ENCODE measurements at regions of chr15 and their contacts with region 1.

Region 1: GRCh38 chr15:40274350-40275274 is 8.3 kb downstream of the ANKRD63 start:
- DNase-seq: peak; percentile 90
- H3K4me3 Mint-ChIP-seq: no peak overlapping the region
- H3K27ac Mint-ChIP-seq: peak overlapping the region; percentile 41
- H3K4me1 Mint-ChIP-seq: peaks cover 5% of the 10 kb centered on the region
- H3K27me3 Mint-ChIP-seq: peaks cover 25% of the 10 kb centered on the region

Region 2: GRCh38 chr15:40182358-40183029 is 92.1 kb before region 1 on chr15:
- CTCF ChIA-PET with region 1: no interaction called
- POLR2A ChIA-PET with region 1: no interaction called
- DNase-seq: no peak
- H3K4me3 Mint-ChIP-seq: peak overlapping the region; percentile 10
- H3K27ac Mint-ChIP-seq: peak overlapping the region; percentile 85
- H3K4me1 Mint-ChIP-seq: peaks cover 36% of the 10 kb centered on the region
- H3K27me3 Mint-ChIP-seq: no peaks in the 10 kb centered on the region

Region 3: GRCh38 chr15:40217159-40217824 is 57.3 kb before region 1 on chr15:
- CTCF ChIA-PET with region 1: interaction called, 32 read pairs
- POLR2A ChIA-PET with region 1: interaction called, 3 read pairs
- DNase-seq: peak; percentile 68
- H3K4me3 Mint-ChIP-seq: no peak overlapping the region
- H3K27ac Mint-ChIP-seq: no peak overlapping the region
- H3K4me1 Mint-ChIP-seq: no peaks in the 10 kb centered on the region
- H3K27me3 Mint-ChIP-seq: no peaks in the 10 kb centered on the region

Region 4: GRCh38 chr15:40263024-40263754 is 11.4 kb before region 1 on chr15:
- CTCF ChIA-PET with region 1: interaction called, 53 read pairs
- POLR2A ChIA-PET with region 1: no interaction called
- DNase-seq: no peak
- H3K4me3 Mint-ChIP-seq: no peak overlapping the region
- H3K27ac Mint-ChIP-seq: no peak overlapping the region
- H3K4me1 Mint-ChIP-seq: no peaks in the 10 kb centered on the region
- H3K27me3 Mint-ChIP-seq: peaks cover 3% of the 10 kb centered on the region

Region 5: GRCh38 chr15:40307421-40308211 is 33.0 kb after region 1 on chr15 and contains the start of gene PLCB2:
- CTCF ChIA-PET with region 1: interaction called, 61 read pairs
- POLR2A ChIA-PET with region 1: no interaction called
- DNase-seq: peak; percentile 79
- H3K4me3 Mint-ChIP-seq: peak within 1 kb of the TSS; percentile 99
- H3K27ac Mint-ChIP-seq: peak within 1 kb of the TSS; percentile 98
- H3K4me1 Mint-ChIP-seq: peaks cover 42% of the 10 kb centered on the region
- H3K27me3 Mint-ChIP-seq: peaks cover 7% of the 10 kb centered on the region
- total RNA-seq, gene PLCB2: 195 to 196 TPM

Region 6: DNA sequence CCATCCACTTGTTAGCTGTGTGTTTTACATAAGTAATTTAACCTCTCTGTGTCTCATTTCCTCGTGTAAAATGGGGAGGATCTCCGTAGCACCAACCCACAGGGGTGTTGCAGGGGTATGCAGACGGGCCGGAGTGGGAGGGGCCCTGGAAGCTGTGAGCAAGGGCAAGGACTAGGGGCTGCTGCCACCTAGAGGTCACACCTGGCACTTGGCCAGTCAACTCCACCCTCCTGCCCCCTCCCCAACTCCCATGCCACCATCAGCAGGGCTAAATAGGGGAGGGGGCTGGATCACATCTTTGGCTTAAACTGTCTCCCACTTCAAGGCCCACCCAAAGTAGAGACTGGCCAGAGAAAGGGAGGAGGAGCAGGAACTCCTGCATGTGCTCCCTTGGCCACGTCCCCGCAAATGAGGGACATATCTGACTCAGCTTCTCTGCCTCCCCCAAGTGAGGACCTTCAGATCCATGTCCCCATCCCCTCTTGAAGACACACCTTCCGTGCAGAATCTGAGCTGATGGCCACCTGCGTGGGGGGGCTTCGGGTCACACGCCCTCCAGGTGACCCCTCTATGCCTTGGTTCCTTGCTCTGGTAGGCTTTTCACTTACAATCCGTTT is 63.5 kb after region 1 on chr15:
- CTCF ChIA-PET with region 1: interaction called, 21 read pairs
- POLR2A ChIA-PET with region 1: no interaction called
- DNase-seq: peak; percentile 82
- H3K4me3 Mint-ChIP-seq: no peak overlapping the region
- H3K27ac Mint-ChIP-seq: peak overlapping the region; percentile 15
- H3K4me1 Mint-ChIP-seq: peaks cover 24% of the 10 kb centered on the region
- H3K27me3 Mint-ChIP-seq: no peaks in the 10 kb centered on the region

Region 7: GRCh38 chr15:40420071-40420713 is 145.6 kb after region 1 on chr15:
- CTCF ChIA-PET with region 1: no interaction called
- POLR2A ChIA-PET with region 1: no interaction called
- DNase-seq: no peak
- H3K4me3 Mint-ChIP-seq: no peak overlapping the region
- H3K27ac Mint-ChIP-seq: no peak overlapping the region
- H3K4me1 Mint-ChIP-seq: peaks cover 2% of the 10 kb centered on the region
- H3K27me3 Mint-ChIP-seq: no peaks in the 10 kb centered on the region